ENCODE measurements at regions of chr12 and their contacts with region 1.

Region 1: DNA sequence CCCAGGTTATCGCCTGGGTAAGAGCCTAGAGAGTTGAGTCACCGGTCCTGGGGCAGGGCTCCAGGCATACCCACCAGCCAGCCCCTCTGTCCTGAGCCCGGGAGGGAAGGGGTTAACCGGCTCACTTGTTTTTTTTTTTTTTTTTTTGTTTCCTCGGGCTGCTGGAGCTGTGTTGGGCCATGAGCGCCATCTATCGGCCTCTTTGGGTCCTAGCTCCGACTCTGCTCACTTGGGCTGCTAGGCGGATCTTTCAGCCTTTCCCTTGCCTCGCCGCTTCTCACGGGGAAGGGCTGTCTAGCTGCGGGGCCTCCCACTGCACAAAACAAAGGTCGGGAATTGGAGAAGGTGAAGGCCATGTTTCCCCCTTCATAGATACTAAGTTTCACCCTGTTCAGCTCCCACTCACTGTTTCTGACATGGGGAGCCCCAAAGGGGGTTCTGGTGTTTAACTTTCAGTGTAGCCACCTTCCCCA is 2.8 kb upstream of the SMUG1 start:
- DNase-seq: peak; percentile 85
- ATAC-seq: peak; percentile 66
- H3K4me3 Mint-ChIP-seq: no peak overlapping the region
- H3K27ac Mint-ChIP-seq: no peak overlapping the region
- H3K4me1 Mint-ChIP-seq: peaks cover 24% of the 10 kb centered on the region
- H3K27me3 Mint-ChIP-seq: peaks cover 50% of the 10 kb centered on the region

Region 2: GRCh38 chr12:54053751-54054741 is 137.5 kb before region 1 on chr12 and contains the start of gene HOXC4:
- CTCF ChIA-PET with region 1: interaction called, 11 read pairs
- POLR2A ChIA-PET with region 1: no interaction called
- DNase-seq: peak; percentile 51
- ATAC-seq: peak; percentile 67
- H3K4me3 Mint-ChIP-seq: peak within 1 kb of the TSS; percentile 74
- H3K27ac Mint-ChIP-seq: peak within 1 kb of the TSS; percentile 73
- H3K4me1 Mint-ChIP-seq: peaks cover 37% of the 10 kb centered on the region
- H3K27me3 Mint-ChIP-seq: peaks cover 82% of the 10 kb centered on the region
- total RNA-seq, gene HOXC4: 1.1 to 1.3 TPM

Region 3: DNA sequence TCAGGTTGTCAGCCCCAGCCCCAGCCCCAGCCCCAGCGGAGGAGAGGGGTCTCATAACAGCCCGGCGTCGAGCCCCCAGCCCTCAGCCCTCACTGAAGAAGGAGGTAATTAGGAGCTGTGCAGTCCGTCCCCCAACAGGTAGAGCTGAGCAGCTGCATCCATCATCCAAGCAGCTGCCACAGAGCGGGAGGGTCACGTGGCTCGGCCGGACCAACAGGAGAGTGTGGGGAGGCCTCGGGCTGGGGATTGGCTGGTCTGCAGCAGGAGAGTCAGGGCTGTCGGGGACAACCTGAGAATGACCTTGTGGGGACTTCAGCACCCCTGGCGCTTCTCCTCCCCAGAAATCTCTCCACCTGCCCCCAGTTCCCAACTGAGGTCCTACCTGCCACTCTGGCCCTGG is 32.4 kb before region 1 on chr12:
- CTCF ChIA-PET with region 1: no interaction called
- POLR2A ChIA-PET with region 1: no interaction called
- DNase-seq: no peak
- ATAC-seq: peak; percentile 69
- H3K4me3 Mint-ChIP-seq: no peak overlapping the region
- H3K27ac Mint-ChIP-seq: no peak overlapping the region
- H3K4me1 Mint-ChIP-seq: no peaks in the 10 kb centered on the region
- H3K27me3 Mint-ChIP-seq: peaks cover 5% of the 10 kb centered on the region

Region 4: GRCh38 chr12:54173066-54173726 is 18.4 kb before region 1 on chr12:
- CTCF ChIA-PET with region 1: interaction called, 11 read pairs
- POLR2A ChIA-PET with region 1: no interaction called
- DNase-seq: peak; percentile 34
- ATAC-seq: peak; percentile 75
- H3K4me3 Mint-ChIP-seq: no peak overlapping the region
- H3K27ac Mint-ChIP-seq: no peak overlapping the region
- H3K4me1 Mint-ChIP-seq: peaks cover 7% of the 10 kb centered on the region
- H3K27me3 Mint-ChIP-seq: no peaks in the 10 kb centered on the region

Region 5: DNA sequence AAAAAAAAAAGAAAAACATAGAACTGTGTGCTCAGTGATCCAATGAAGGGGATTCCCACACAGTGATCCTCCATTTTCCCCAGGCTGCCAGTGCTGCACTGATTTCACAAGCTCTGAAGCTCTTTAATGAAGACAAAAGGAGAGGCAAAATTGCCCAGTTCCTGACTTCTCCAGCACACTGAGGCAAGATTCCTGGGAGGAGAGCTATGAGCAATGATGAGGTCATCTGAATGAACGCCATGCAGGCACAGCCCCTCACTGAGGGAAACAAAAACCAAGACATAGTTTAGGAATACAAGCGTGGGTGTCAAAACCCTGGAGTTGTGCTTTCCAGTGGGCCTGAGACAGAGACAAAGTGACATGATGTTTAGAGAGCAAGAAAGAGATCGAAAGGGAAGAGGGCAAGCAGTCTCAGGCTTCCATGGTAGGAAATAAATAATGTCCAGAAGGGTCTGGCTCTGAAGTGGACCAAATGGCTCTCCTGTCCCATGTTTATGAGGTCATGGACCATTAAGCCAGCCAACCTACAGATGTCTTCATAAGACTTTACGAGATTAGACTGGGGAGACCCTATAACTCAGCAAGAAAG is 38.1 kb after region 1 on chr12:
- CTCF ChIA-PET with region 1: no interaction called
- POLR2A ChIA-PET with region 1: no interaction called
- DNase-seq: no peak
- ATAC-seq: no peak
- H3K4me3 Mint-ChIP-seq: no peak overlapping the region
- H3K27ac Mint-ChIP-seq: no peak overlapping the region
- H3K4me1 Mint-ChIP-seq: peaks cover 18% of the 10 kb centered on the region
- H3K27me3 Mint-ChIP-seq: no peaks in the 10 kb centered on the region

Region 6: DNA sequence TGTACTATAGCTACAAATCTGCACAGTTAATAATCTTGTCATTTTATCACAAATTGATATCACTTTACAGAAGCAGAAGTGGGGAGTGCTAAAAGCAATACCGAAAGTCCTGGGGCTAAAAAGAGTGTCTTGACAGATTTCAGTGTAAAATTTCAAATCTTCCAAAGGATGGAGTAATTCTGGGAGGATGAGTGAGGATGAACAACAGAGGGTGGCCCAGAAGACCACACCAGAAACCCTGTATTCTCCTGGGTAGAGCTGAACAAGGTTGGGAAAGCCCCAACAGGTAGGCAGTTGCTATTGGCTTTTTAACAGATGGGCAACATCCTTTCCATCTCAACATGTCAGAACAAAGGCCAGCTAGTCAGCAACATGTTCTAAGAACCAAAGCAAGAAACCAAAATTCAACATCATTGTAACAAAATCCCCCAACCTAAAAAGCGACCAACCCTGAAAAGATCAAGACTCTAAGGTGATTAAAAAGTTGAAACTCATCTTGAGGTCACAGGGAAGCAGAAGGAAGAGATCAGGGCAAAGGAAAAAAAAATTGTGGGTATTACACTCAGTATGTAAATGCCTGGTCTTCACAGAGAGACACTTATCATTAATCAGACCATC is 49.5 kb after region 1 on chr12:
- CTCF ChIA-PET with region 1: no interaction called
- POLR2A ChIA-PET with region 1: no interaction called
- DNase-seq: no peak
- ATAC-seq: no peak
- H3K4me3 Mint-ChIP-seq: no peak overlapping the region
- H3K27ac Mint-ChIP-seq: peak overlapping the region; percentile 54
- H3K4me1 Mint-ChIP-seq: peaks cover 17% of the 10 kb centered on the region
- H3K27me3 Mint-ChIP-seq: no peaks in the 10 kb centered on the region

Region 7: GRCh38 chr12:54251667-54252284 is 60.2 kb after region 1 on chr12:
- CTCF ChIA-PET with region 1: no interaction called
- POLR2A ChIA-PET with region 1: no interaction called
- DNase-seq: peak; percentile 31
- ATAC-seq: peak; percentile 53
- H3K4me3 Mint-ChIP-seq: no peak overlapping the region
- H3K27ac Mint-ChIP-seq: no peak overlapping the region
- H3K4me1 Mint-ChIP-seq: no peaks in the 10 kb centered on the region
- H3K27me3 Mint-ChIP-seq: no peaks in the 10 kb centered on the region